ENCODE measurements at regions of chr12 and their contacts with region 1.

Region 1: DNA sequence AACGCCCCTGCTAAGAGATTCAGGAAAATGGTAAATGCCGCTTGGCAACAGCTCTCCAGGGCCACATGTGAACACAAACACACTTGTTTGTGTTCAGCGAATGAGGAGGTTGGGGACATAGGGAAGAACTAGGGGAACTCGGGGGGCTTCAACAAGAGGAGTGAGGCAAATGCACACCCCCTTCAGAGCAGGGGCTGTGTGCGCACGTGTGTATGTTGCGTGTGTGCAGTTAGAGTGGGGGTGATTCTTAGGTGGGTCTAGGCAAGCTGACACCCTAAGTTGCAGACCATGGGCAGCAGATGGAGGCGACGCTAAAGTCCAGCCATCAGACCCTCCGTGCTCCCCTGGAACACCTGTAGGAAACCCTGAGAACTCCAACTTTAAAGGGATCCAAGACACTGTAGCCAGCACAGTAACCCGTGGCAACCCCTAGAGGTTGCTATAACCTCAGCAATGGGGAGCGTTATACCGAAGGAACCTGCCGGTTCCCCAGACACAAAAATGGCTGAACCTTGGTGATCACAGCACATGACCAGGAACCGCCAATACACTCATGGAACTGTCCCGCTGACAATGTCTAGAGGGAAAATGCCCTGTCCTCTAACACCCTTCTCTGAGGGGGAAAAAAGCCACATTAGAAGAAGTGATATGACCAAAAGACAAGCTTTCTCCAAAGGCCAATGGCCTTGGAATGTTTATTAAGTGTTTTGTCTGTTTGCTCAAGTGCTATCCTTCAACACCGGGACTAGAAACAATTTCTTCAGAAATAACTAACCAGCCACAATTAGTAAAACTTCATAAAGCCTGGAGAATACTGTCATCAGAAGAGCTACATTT is 86.5 kb upstream of the CEP83 start:
- DNase-seq: no peak
- H3K4me3 ChIP-seq: no peak overlapping the region
- CTCF ChIP-seq: no peak
- POLR2A ChIP-seq: no peak

Region 2: DNA sequence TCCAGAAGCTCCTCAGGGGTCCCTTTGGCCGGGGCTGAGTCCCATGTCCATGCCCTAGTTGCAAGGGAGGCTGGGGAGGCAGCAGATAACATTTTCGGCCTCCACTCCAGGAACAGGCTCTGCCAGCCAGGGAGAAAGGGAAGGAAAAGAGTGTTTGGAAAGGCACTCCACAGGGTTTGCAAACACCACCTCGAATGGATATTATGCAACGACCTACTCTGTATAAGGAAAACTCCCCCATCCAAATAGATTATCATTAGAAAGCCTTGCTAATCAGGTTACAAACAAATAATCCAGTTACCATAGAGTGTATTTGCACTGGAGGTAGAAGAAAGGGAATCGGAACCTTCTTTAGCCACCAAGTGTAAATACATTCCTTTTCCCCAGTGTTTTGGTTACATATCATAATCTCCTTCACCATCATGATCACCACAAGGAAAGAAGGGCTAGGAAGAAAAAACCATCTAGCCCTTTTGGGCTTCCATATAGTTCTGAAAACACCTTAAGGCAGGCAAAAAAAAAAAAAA is 63.8 kb after region 1 on chr12:
- intact Hi-C with region 1: no loop called
- DNase-seq: no peak
- H3K4me3 ChIP-seq: no peak overlapping the region
- CTCF ChIP-seq: no peak
- POLR2A ChIP-seq: no peak

Region 3: DNA sequence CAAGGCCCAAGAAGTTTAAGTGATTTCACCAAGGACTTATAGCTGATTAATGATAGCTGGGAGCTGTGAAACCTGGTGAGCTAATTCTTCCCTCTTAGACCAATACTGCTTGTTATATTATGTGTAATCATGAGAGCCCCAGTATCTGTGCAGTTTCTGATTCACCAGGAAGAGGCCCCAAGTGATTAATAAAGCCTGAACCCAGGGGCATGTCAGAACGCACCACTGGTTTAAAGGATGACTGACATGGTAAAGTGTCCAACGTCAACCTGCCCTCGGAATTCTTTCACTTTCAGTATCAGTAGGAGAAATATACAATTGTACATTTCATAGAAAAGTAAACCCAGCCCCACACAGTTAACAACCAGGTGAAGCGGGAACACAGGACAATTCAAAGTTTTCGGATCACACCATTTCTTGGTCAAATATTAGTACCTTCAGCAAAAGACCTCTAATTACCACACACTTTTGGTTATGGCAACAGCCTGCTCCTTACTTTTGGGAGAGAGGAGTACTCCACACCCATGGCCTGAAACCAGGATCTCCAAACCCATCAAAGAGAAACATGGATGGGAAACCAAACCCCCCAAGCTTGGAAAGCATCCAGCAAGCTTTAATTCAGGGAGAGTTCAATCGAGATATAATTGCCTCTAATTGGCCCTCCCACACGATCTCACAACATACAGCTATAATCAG is 75.7 kb after region 1 on chr12:
- intact Hi-C with region 1: no loop called
- DNase-seq: no peak
- H3K4me3 ChIP-seq: no peak overlapping the region
- CTCF ChIP-seq: no peak
- POLR2A ChIP-seq: no peak

Region 4: GRCh38 chr12:94745562-94745961 is 199.4 kb after region 1 on chr12:
- intact Hi-C with region 1: loop called (anchors 10 kb)
- DNase-seq: no peak
- H3K4me3 ChIP-seq: no peak overlapping the region
- CTCF ChIP-seq: no peak
- POLR2A ChIP-seq: no peak

Measured in lower leg skin (tissue), 4 donors.